Psoas muscle (tissue), 8 donors: ENCODE measurements at regions of chr17 and their contacts with region 1.

Region 1: DNA sequence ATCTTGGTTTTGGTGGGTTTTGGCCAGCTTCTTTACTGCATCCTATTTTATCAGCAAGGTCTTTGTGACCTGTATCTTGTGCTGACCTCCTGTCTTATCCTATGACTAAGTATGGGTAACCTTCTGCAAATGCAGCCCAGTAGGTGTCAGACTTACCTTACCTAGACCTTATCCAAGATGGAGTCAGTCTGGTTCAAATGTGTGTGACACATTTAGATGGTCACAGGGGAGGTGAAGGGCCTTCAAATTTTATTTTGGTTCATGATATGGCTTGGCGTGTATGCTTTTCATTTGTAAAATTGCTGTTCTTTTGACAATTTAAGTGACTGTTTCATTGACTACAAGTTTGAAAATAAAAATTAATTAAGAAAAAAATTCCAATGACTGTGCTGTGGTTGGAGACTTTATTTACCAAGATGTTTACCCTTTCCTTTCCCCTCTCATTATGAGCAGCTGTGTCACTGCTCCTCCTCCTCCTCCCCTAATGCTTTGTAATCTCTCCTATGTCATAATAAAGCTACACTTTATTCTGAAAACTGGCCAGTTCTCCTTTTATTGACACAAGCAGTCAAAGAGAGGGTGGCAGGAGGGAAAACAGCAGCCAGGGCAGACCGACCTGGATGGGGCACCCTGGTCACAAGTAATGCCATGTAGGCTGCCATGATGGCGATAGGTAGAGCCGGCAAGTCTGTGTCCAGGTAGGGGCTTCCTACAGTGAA is 49.4 kb downstream of the TNFRSF13B start:
- DNase-seq: no peak
- ATAC-seq: peak in 1 of 4 donors; percentile 41
- H3K4me3 ChIP-seq: no peak overlapping the region
- H3K27ac ChIP-seq: no peak overlapping the region
- H3K4me1 ChIP-seq: no peaks in the 10 kb centered on the region
- H3K27me3 ChIP-seq: no peaks in the 10 kb centered on the region
- CTCF ChIP-seq: no peak

Region 2: GRCh38 chr17:16987830-16988601 is 65.5 kb after region 1 on chr17:
- intact Hi-C with region 1: loop called (anchors 2 to 5 kb)
- DNase-seq: peak; percentile 76 to 84
- ATAC-seq: peak; percentile 30 to 52 (median 40)
- H3K4me3 ChIP-seq: no peak overlapping the region
- H3K27ac ChIP-seq: no peak overlapping the region
- H3K4me1 ChIP-seq: no peaks in the 10 kb centered on the region
- H3K27me3 ChIP-seq: no peaks in the 10 kb centered on the region
- CTCF ChIP-seq: no peak